ENCODE measurements at regions of chr1 and their contacts with region 1.

Region 1: GRCh38 chr1:207404849-207405525 is 49.1 kb upstream of the CR2 start:
- DNase-seq: peak; percentile 32
- H3K4me3 Mint-ChIP-seq: no peak overlapping the region
- H3K27ac Mint-ChIP-seq: no peak overlapping the region
- H3K4me1 Mint-ChIP-seq: peaks cover 15% of the 10 kb centered on the region
- H3K27me3 Mint-ChIP-seq: no peaks in the 10 kb centered on the region
- CTCF ChIP-seq: peak; percentile 62

Region 2: DNA sequence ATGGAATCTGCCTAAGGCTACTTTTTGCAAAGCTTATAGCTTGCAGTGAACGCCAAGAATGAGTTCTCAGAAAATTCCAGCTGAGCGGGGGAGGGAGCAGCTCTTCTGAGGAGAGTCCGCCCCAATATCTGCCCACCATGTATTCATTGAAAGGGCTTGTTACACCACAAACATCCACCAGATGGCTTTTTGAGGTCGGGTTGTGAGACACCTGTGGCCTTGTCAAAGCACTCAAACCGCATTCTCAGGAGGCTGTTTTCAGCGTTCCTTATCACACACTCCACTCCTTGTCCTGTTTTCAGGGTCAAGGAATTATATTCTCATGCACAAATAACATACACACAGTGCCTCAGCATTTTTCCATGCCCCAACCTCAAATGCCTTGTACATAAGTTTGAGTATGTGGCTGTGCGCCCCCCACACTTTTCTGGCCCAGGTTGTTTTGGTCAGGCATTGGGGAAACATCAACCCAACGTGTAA is 320.2 kb before region 1 on chr1:
- CTCF ChIA-PET with region 1: interaction called, 18 read pairs
- intact Hi-C with region 1: loop called (anchors 1 kb)
- DNase-seq: peak; percentile 76
- H3K4me3 Mint-ChIP-seq: no peak overlapping the region
- H3K27ac Mint-ChIP-seq: no peak overlapping the region
- H3K4me1 Mint-ChIP-seq: peaks cover 38% of the 10 kb centered on the region
- H3K27me3 Mint-ChIP-seq: no peaks in the 10 kb centered on the region
- CTCF ChIP-seq: peak; percentile 79

Region 3: DNA sequence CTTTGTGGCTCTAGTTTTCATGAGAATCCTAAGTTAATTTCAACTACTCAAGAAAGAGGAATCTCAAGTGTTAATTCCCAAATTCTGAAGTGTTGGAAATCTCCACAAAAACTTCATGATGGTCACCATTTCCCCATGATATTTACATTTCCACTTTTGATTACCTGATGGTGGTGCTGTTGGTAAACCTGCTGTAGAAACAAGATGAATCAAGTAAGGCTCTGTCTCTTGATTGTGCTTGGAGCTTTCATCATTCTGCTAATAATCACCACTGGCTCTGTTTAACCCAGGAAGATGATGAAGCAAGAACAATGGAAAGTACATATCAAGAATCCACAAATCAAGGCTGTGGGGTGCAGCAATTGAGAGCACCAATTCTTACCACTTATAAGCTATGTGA is 223.1 kb before region 1 on chr1:
- CTCF ChIA-PET with region 1: interaction called, 13 read pairs
- intact Hi-C with region 1: loop called (anchors 1 kb)
- DNase-seq: no peak
- H3K4me3 Mint-ChIP-seq: no peak overlapping the region
- H3K27ac Mint-ChIP-seq: no peak overlapping the region
- H3K4me1 Mint-ChIP-seq: peaks cover 5% of the 10 kb centered on the region
- H3K27me3 Mint-ChIP-seq: no peaks in the 10 kb centered on the region
- CTCF ChIP-seq: no peak

Region 4: GRCh38 chr1:207240325-207241095 is 164.5 kb before region 1 on chr1:
- CTCF ChIA-PET with region 1: no interaction called
- intact Hi-C with region 1: loop called (anchors 5 kb)
- DNase-seq: peak; percentile 32
- H3K4me3 Mint-ChIP-seq: peak overlapping the region; percentile 56
- H3K27ac Mint-ChIP-seq: peak overlapping the region; percentile 97
- H3K4me1 Mint-ChIP-seq: peaks cover 55% of the 10 kb centered on the region
- H3K27me3 Mint-ChIP-seq: no peaks in the 10 kb centered on the region
- CTCF ChIP-seq: no peak

Region 5: DNA sequence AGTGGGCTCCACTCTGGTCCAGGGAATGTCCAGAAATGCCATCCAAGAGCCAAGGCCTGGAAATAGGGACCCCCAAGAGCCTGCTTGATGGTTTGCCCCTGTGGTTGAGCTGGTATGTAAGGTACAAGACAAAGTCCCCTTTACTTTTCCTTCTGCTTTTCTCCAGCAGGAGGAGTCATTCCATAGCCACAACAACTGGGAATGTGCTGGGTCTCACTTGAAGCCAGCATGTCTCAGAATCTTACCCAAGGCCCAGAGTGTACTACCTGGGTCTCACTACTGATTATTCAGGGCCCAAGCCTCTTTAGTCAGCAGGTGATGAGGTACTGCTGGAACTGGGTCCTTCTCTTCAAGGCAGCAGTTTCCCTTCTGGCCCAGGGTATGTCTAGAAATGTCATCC is 145.6 kb before region 1 on chr1:
- CTCF ChIA-PET with region 1: interaction called, 7 read pairs
- intact Hi-C with region 1: loop called (anchors 2 kb)
- DNase-seq: peak; percentile 33
- H3K4me3 Mint-ChIP-seq: no peak overlapping the region
- H3K27ac Mint-ChIP-seq: no peak overlapping the region
- H3K4me1 Mint-ChIP-seq: no peaks in the 10 kb centered on the region
- H3K27me3 Mint-ChIP-seq: no peaks in the 10 kb centered on the region
- CTCF ChIP-seq: peak; percentile 49

Region 6: GRCh38 chr1:207499573-207499972 is 94.6 kb after region 1 on chr1:
- CTCF ChIA-PET with region 1: interaction called, 5 read pairs
- intact Hi-C with region 1: loop called (anchors 5 kb)
- DNase-seq: peak; percentile 71
- H3K4me3 Mint-ChIP-seq: no peak overlapping the region
- H3K27ac Mint-ChIP-seq: no peak overlapping the region
- H3K4me1 Mint-ChIP-seq: peaks cover 5% of the 10 kb centered on the region
- H3K27me3 Mint-ChIP-seq: peaks cover 50% of the 10 kb centered on the region
- CTCF ChIP-seq: peak; percentile 74

Region 7: GRCh38 chr1:207713529-207713928 is 308.5 kb after region 1 on chr1:
- CTCF ChIA-PET with region 1: no interaction called
- intact Hi-C with region 1: no loop called
- DNase-seq: no peak
- H3K4me3 Mint-ChIP-seq: no peak overlapping the region
- H3K27ac Mint-ChIP-seq: no peak overlapping the region
- H3K4me1 Mint-ChIP-seq: no peaks in the 10 kb centered on the region
- H3K27me3 Mint-ChIP-seq: no peaks in the 10 kb centered on the region
- CTCF ChIP-seq: no peak